ENCODE measurements at regions of chr6 and their contacts with region 1.

Region 1: GRCh38 chr6:112043032-112044007 is 10.6 kb upstream of the CCN6 start:
- DNase-seq: peak; percentile 92
- H3K4me3 ChIP-seq: peak overlapping the region; percentile 54 to 65
- H3K27ac ChIP-seq: peak overlapping the region; percentile 77 to 80
- H3K4me1 ChIP-seq: no peaks in the 10 kb centered on the region
- H3K27me3 ChIP-seq: no peaks in the 10 kb centered on the region
- CTCF ChIP-seq: peak; percentile 90 to 91 (median 90)
- POLR2A ChIP-seq: no peak

Region 2: GRCh38 chr6:111259089-111259831 is 784.1 kb before region 1 on chr6:
- intact Hi-C with region 1: loop called (anchors 10 kb)
- DNase-seq: peak; percentile 100
- H3K4me3 ChIP-seq: peak overlapping the region; percentile 76 to 88
- H3K27ac ChIP-seq: peak overlapping the region; percentile 45 to 88
- H3K4me1 ChIP-seq: peaks cover 7% of the 10 kb centered on the region
- H3K27me3 ChIP-seq: no peaks in the 10 kb centered on the region
- CTCF ChIP-seq: peak; percentile 95 to 99 (median 99)
- POLR2A ChIP-seq: no peak

Region 3: GRCh38 chr6:111709615-111710398 is 333.5 kb before region 1 on chr6:
- intact Hi-C with region 1: loop called (anchors 10 kb)
- DNase-seq: peak; percentile 72
- H3K4me3 ChIP-seq: no peak overlapping the region
- H3K27ac ChIP-seq: peak overlapping the region; percentile 50 to 52
- H3K4me1 ChIP-seq: peaks cover 12% of the 10 kb centered on the region
- H3K27me3 ChIP-seq: no peaks in the 10 kb centered on the region
- CTCF ChIP-seq: peak; percentile 80 to 86 (median 84)
- POLR2A ChIP-seq: no peak

Region 4: DNA sequence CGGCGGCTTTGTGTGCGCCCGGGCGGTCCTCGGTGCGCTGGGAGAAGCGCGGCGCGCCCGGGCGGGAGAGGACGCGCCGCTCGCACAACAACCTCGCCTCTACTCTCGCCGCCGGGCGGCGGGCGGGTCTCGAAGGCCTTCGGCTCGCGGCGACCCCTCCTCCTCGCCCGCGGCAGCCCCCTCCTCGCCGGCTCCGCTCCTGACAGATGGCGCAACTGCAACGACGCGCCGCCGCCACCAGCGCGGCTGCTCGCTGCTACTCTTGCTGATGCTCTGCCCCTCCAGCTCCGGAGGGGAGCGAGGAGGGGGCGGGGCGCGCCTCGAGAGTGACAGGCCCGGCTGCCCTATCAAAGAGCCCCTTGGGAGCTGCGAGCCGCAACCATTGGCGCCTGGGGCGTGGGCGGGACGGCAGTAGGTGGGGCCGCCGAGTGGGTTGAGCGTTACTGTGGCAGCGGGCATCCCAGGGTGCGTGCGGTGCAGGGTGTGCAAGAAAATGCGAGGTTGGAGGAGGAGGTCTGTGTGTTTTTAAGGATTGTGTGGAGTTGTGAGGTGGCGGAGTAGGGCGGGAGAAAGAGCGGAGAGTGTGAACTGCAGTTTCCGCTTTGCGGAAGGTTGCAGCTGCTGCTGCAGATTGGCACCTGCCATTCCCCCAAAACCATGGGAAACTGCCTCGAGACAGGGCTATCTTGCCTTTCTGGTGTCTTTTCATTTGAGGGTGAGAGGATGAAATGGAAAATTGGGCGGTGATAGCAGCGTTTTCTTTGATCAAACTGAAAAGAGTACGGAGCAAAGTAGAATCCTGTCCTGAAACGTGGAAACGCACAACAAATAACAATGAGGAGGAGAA is 169.9 kb before region 1 on chr6 and contains the start of gene FYN:
- intact Hi-C with region 1: loop called (anchors 5 kb)
- DNase-seq: peak; percentile 99
- H3K4me3 ChIP-seq: peak within 1 kb of the TSS; percentile 76 to 79
- H3K27ac ChIP-seq: peak within 1 kb of the TSS; percentile 63 to 79
- H3K4me1 ChIP-seq: peaks cover 12% of the 10 kb centered on the region
- H3K27me3 ChIP-seq: no peaks in the 10 kb centered on the region
- CTCF ChIP-seq: peak; percentile 34 to 59 (median 35)
- POLR2A ChIP-seq: peak; percentile 82
- total RNA-seq, gene FYN: 104 to 145 TPM

Measured in testis (tissue), 5 donors.